CD4-positive, alpha-beta memory T cell (primary cell): ENCODE measurements at regions of chr6 and their contacts with region 1.

Region 1: DNA sequence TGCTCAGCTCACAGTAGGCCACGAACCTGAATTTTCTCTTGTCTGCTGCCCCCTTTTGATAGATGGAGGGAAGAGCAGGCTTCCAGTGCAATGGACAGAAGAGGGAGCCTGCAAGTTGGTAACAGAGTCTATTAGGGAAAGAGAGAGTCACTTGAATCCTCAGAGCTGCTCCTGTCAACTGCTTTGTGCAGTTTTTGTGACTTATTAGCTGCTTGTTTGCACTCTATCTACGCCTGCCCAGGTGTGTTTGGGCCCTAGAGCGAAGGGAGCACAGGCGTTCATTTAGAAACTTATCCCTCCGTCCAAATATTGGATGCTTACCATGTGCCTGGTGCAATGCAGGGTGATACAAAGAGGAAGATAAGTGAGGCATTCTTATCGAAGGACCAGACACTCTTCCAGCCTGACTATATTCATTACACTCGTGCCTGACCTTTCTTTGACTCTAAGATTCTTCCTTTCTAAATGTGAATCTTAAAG is 11.6 kb upstream of the SLC2A12 start:
- DNase-seq: peak; percentile 56 to 62 (median 59)
- H3K4me3 ChIP-seq: no peak overlapping the region
- H3K4me3 Mint-ChIP-seq: no peak overlapping the region
- H3K27ac ChIP-seq: no peak overlapping the region
- H3K27ac Mint-ChIP-seq: no peak overlapping the region
- H3K4me1 ChIP-seq: peaks cover 4% of the 10 kb centered on the region
- H3K4me1 Mint-ChIP-seq: peaks cover 0 to 2% (median under 1%) of the 10 kb centered on the region in 4 donors
- H3K27me3 ChIP-seq: no peaks in the 10 kb centered on the region
- H3K27me3 Mint-ChIP-seq: peaks cover 2 to 4% of the 10 kb centered on the region in 2 donors

Region 2: GRCh38 chr6:133916650-133917151 is 147.3 kb before region 1 on chr6:
- CTCF ChIA-PET with region 1: interaction called, 207 read pairs
- POLR2A ChIA-PET with region 1: no interaction called
- intact Hi-C with region 1: no loop called
- DNase-seq: peak; percentile 49 to 61 (median 56)
- H3K4me3 ChIP-seq: no peak overlapping the region
- H3K4me3 Mint-ChIP-seq: peak overlapping the region in 2 of 8 donors; percentile 7 to 37
- H3K27ac ChIP-seq: no peak overlapping the region
- H3K27ac Mint-ChIP-seq: no peak overlapping the region
- H3K4me1 ChIP-seq: no peaks in the 10 kb centered on the region
- H3K4me1 Mint-ChIP-seq: peaks cover 0 to 4% (median 2%) of the 10 kb centered on the region in 4 donors
- H3K27me3 ChIP-seq: no peaks in the 10 kb centered on the region
- H3K27me3 Mint-ChIP-seq: peaks cover 4 to 6% of the 10 kb centered on the region in 2 donors

Region 3: DNA sequence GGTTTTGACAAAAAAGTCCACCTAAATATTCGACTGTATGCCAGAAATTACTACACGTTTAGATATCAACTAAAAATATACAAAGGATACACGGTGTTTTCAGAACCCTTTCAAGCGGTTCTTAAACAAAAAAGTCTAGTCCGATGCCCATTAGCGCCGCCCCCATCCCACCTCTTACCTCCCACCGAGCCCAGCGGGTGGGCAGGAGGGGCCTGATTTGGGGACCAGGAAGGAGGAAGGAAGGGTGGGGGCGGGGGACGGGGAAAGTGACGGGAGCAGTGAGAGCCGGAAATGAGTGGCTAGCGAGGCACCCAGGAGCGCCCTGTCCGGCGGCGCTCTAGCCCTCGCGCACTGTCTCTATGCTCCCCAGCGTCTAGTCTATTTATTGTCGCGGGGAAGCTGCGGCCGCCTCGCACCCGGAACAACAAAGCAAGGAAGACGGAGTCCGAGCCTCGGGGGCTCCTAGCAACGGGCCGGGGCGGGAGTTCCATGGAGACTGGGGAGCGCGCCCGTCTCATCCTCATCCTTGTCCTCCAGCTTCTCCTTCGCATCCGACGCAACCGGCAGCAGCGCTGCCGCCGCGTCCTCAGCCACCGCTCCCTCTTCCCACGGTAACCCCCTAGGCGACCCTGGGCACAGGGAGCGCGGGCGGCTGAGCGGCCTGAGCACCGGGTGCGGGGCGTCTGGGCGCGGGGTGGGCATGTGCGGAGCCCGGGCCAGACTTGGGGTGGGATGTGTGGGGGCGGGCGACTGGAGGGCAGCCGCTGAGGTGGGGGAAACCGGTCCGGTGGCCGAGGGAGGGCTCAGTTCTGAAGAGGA is 111.0 kb before region 1 on chr6 and contains the start of gene TBPL1:
- CTCF ChIA-PET with region 1: interaction called, 11 read pairs
- POLR2A ChIA-PET with region 1: no interaction called
- intact Hi-C with region 1: no loop called
- DNase-seq: peak; percentile 83 to 92 (median 84)
- H3K4me3 ChIP-seq: peak within 1 kb of the TSS; percentile 85 to 97
- H3K4me3 Mint-ChIP-seq: peak within 1 kb of the TSS; percentile 89 to 99 (median 97)
- H3K27ac ChIP-seq: peak within 1 kb of the TSS; percentile 65
- H3K27ac Mint-ChIP-seq: peak within 1 kb of the TSS; percentile 92 to 98 (median 96)
- H3K4me1 ChIP-seq: peaks cover 50% of the 10 kb centered on the region
- H3K4me1 Mint-ChIP-seq: peaks cover 37 to 55% (median 42%) of the 10 kb centered on the region in 4 donors
- H3K27me3 ChIP-seq: no peaks in the 10 kb centered on the region
- H3K27me3 Mint-ChIP-seq: no peaks in the 10 kb centered on the region
- total RNA-seq, gene TBPL1: 34.8 to 39.2 TPM

Region 4: DNA sequence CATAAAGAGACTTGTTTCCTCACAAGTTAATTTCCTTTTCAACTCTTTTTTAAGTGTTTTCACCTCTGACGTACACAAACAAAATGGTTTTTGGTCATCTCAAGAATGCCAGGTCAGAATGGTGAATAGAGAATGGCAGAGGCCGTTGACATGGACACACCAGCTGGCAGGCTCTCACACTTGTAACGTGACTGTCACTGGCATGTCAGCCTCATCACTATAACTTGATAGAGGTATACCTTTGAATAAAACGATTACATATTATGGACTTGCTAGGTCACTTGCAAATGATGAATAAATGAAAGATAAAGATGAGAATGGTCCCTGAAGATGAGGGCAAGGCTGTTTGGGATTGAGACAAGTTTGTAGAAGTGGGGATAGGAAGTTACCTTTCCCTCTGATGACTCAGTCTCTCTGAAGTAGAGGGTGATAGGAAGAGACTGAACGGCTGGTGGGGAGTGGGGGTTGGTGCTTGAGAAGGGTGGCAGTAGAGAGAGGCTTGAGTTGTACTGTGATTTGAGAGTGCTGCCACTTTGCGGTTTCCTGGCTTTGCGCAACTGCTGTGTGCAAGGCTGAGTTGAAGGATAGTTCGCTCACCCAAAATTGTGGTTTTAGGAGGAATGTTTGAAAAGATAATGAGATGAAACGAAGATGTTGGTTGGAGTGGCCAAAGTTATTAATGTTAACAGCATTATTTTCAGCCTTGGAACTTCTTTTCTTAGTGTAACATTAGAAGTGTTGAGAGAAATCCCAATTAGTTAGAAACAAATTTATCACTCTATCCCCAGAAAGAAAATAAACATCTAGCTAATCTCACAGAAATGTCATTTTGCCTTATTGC is 80.7 kb before region 1 on chr6:
- CTCF ChIA-PET with region 1: interaction called, 39 read pairs
- POLR2A ChIA-PET with region 1: no interaction called
- intact Hi-C with region 1: no loop called
- DNase-seq: peak; percentile 21 to 68 (median 30)
- H3K4me3 ChIP-seq: no peak overlapping the region
- H3K4me3 Mint-ChIP-seq: peak overlapping the region; percentile 22 to 75 (median 46)
- H3K27ac ChIP-seq: no peak overlapping the region
- H3K27ac Mint-ChIP-seq: peak overlapping the region; percentile 10 to 72 (median 44)
- H3K4me1 ChIP-seq: peaks cover 29% of the 10 kb centered on the region
- H3K4me1 Mint-ChIP-seq: peaks cover 24 to 52% (median 39%) of the 10 kb centered on the region in 4 donors
- H3K27me3 ChIP-seq: no peaks in the 10 kb centered on the region
- H3K27me3 Mint-ChIP-seq: no peaks in the 10 kb centered on the region

Region 5: GRCh38 chr6:134007077-134007476 is 56.9 kb before region 1 on chr6:
- CTCF ChIA-PET with region 1: no interaction called
- POLR2A ChIA-PET with region 1: no interaction called
- intact Hi-C with region 1: no loop called
- DNase-seq: no peak
- H3K4me3 ChIP-seq: no peak overlapping the region
- H3K4me3 Mint-ChIP-seq: no peak overlapping the region
- H3K27ac ChIP-seq: no peak overlapping the region
- H3K27ac Mint-ChIP-seq: no peak overlapping the region
- H3K4me1 ChIP-seq: no peaks in the 10 kb centered on the region
- H3K4me1 Mint-ChIP-seq: no peaks in the 10 kb centered on the region
- H3K27me3 ChIP-seq: no peaks in the 10 kb centered on the region
- H3K27me3 Mint-ChIP-seq: peaks cover 13 to 14% of the 10 kb centered on the region in 2 donors

Region 6: GRCh38 chr6:134074151-134075055 is 10.4 kb after region 1 on chr6:
- CTCF ChIA-PET with region 1: interaction called, 20 read pairs
- POLR2A ChIA-PET with region 1: interaction called, 4 read pairs
- intact Hi-C with region 1: no loop called
- DNase-seq: no peak
- H3K4me3 ChIP-seq: no peak overlapping the region
- H3K4me3 Mint-ChIP-seq: no peak overlapping the region
- H3K27ac ChIP-seq: no peak overlapping the region
- H3K27ac Mint-ChIP-seq: no peak overlapping the region
- H3K4me1 ChIP-seq: no peaks in the 10 kb centered on the region
- H3K4me1 Mint-ChIP-seq: peaks cover 0 to 6% (median 4%) of the 10 kb centered on the region in 4 donors
- H3K27me3 ChIP-seq: no peaks in the 10 kb centered on the region
- H3K27me3 Mint-ChIP-seq: peaks cover 0 to 3% of the 10 kb centered on the region in 2 donors

Region 7: GRCh38 chr6:134145786-134146185 is 81.8 kb after region 1 on chr6:
- CTCF ChIA-PET with region 1: interaction called, 10 read pairs
- POLR2A ChIA-PET with region 1: no interaction called
- intact Hi-C with region 1: no loop called
- DNase-seq: no peak
- H3K4me3 ChIP-seq: no peak overlapping the region
- H3K4me3 Mint-ChIP-seq: no peak overlapping the region
- H3K27ac ChIP-seq: no peak overlapping the region
- H3K27ac Mint-ChIP-seq: no peak overlapping the region
- H3K4me1 ChIP-seq: no peaks in the 10 kb centered on the region
- H3K4me1 Mint-ChIP-seq: no peaks in the 10 kb centered on the region
- H3K27me3 ChIP-seq: no peaks in the 10 kb centered on the region
- H3K27me3 Mint-ChIP-seq: peaks cover 0 to 4% of the 10 kb centered on the region in 2 donors